ENCODE measurements at regions of chr9 and their contacts with region 1.

Region 1: GRCh38 chr9:77456829-77457437 is 191.2 kb downstream of the GNA14 start:
- DNase-seq: peak; percentile 84 to 94 (median 88)
- ATAC-seq: peak; percentile 77 to 89
- H3K4me3 ChIP-seq: no peak overlapping the region
- H3K27ac ChIP-seq: no peak overlapping the region
- H3K4me1 ChIP-seq: no peaks in the 10 kb centered on the region
- H3K27me3 ChIP-seq: no peaks in the 10 kb centered on the region

Region 2: GRCh38 chr9:76810377-76810957 is 646.5 kb before region 1 on chr9:
- intact Hi-C with region 1: no loop called
- DNase-seq: peak in 1 of 3 donors; percentile 23
- ATAC-seq: peak; percentile 77 to 80
- H3K4me3 ChIP-seq: no peak overlapping the region
- H3K27ac ChIP-seq: no peak overlapping the region
- H3K4me1 ChIP-seq: no peaks in the 10 kb centered on the region
- H3K27me3 ChIP-seq: no peaks in the 10 kb centered on the region

Region 3: GRCh38 chr9:77648234-77649120 is 191.5 kb after region 1 on chr9 and contains the start of gene GNA14:
- intact Hi-C with region 1: loop called in 2 of 4 experiments (anchors 2 to 10 kb)
- DNase-seq: peak; percentile 80 to 92 (median 90)
- ATAC-seq: peak; percentile 91 to 92
- H3K4me3 ChIP-seq: peak within 1 kb of the TSS; percentile 55
- H3K27ac ChIP-seq: peak within 1 kb of the TSS; percentile 11
- H3K4me1 ChIP-seq: no peaks in the 10 kb centered on the region
- H3K27me3 ChIP-seq: no peaks in the 10 kb centered on the region
- total RNA-seq, gene GNA14: 4.0 to 5.2 (median 4.4) TPM

Region 4: GRCh38 chr9:77751341-77752091 is 294.6 kb after region 1 on chr9:
- intact Hi-C with region 1: loop called in 1 of 4 experiments (anchors 10 kb)
- DNase-seq: no peak
- ATAC-seq: peak; percentile 75 to 82
- H3K4me3 ChIP-seq: no peak overlapping the region
- H3K27ac ChIP-seq: no peak overlapping the region
- H3K4me1 ChIP-seq: no peaks in the 10 kb centered on the region
- H3K27me3 ChIP-seq: no peaks in the 10 kb centered on the region

Measured in right cardiac atrium (tissue), 5 donors.